ENCODE measurements at regions of chr1 and their contacts with region 1.

Region 1: GRCh38 chr1:84619383-84620102 is 45.3 kb upstream of the CTBS start:
- DNase-seq: no peak
- CTCF ChIP-seq: no peak

Region 2: GRCh38 chr1:83761167-83762038 is 858.1 kb before region 1 on chr1:
- in situ Hi-C with region 1: no loop called
- DNase-seq: peak; percentile 69
- CTCF ChIP-seq: no peak

Region 3: GRCh38 chr1:84412316-84412942 is 207.1 kb before region 1 on chr1:
- in situ Hi-C with region 1: no loop called
- DNase-seq: no peak
- CTCF ChIP-seq: no peak

Region 4: GRCh38 chr1:84442256-84442655 is 177.3 kb before region 1 on chr1:
- in situ Hi-C with region 1: loop called (anchors 10 kb)
- DNase-seq: peak; percentile 67
- CTCF ChIP-seq: peak; percentile 45

Region 5: GRCh38 chr1:84668185-84668584 is 48.6 kb after region 1 on chr1:
- in situ Hi-C with region 1: no loop called
- DNase-seq: no peak
- CTCF ChIP-seq: no peak